Colonic mucosa (tissue), 4 donors: ENCODE measurements at regions of chr3 and their contacts with region 1.

Region 1: GRCh38 chr3:53729618-53730017 is 116.6 kb downstream of the CHDH start:
- DNase-seq: no peak
- H3K4me3 ChIP-seq: no peak overlapping the region
- H3K27ac ChIP-seq: no peak overlapping the region
- H3K4me1 ChIP-seq: no peaks in the 10 kb centered on the region
- H3K27me3 ChIP-seq: no peaks in the 10 kb centered on the region
- CTCF ChIP-seq: peak; percentile 13

Region 2: GRCh38 chr3:53913401-53913800 is 183.8 kb after region 1 on chr3:
- intact Hi-C with region 1: loop called (anchors 10 kb)
- DNase-seq: no peak
- H3K4me3 ChIP-seq: no peak overlapping the region
- H3K27ac ChIP-seq: no peak overlapping the region
- H3K4me1 ChIP-seq: no peaks in the 10 kb centered on the region
- H3K27me3 ChIP-seq: no peaks in the 10 kb centered on the region
- CTCF ChIP-seq: no peak